Transverse colon (tissue), 4 donors: ENCODE measurements at regions of chr4 and their contacts with region 1.

Region 1: GRCh38 chr4:139734875-139735380 is 69.3 kb downstream of the MGST2 start:
- DNase-seq: peak; percentile 74
- H3K4me3 ChIP-seq: peak overlapping the region; percentile 21 to 54 (median 30)
- H3K27ac ChIP-seq: peak overlapping the region; percentile 70 to 89 (median 78)
- H3K4me1 ChIP-seq: peaks cover 0 to 19% (median 11%) of the 10 kb centered on the region in 4 donors
- H3K27me3 ChIP-seq: no peaks in the 10 kb centered on the region
- CTCF ChIP-seq: peak in 4 of 5 experiments; percentile 65 to 73 (median 72)
- EP300 ChIP-seq: no peak
- POLR2A ChIP-seq: no peak

Region 2: GRCh38 chr4:139887962-139888735 is 153.2 kb after region 1 on chr4:
- in situ Hi-C with region 1: no loop called
- intact Hi-C with region 1: loop called (anchors 10 kb)
- DNase-seq: peak; percentile 16
- H3K4me3 ChIP-seq: no peak overlapping the region
- H3K27ac ChIP-seq: peak overlapping the region in 1 of 4 donors; percentile 18
- H3K4me1 ChIP-seq: peaks cover 0 to 23% (median 10%) of the 10 kb centered on the region in 4 donors
- H3K27me3 ChIP-seq: no peaks in the 10 kb centered on the region
- CTCF ChIP-seq: no peak
- EP300 ChIP-seq: no peak
- POLR2A ChIP-seq: no peak

Region 3: DNA sequence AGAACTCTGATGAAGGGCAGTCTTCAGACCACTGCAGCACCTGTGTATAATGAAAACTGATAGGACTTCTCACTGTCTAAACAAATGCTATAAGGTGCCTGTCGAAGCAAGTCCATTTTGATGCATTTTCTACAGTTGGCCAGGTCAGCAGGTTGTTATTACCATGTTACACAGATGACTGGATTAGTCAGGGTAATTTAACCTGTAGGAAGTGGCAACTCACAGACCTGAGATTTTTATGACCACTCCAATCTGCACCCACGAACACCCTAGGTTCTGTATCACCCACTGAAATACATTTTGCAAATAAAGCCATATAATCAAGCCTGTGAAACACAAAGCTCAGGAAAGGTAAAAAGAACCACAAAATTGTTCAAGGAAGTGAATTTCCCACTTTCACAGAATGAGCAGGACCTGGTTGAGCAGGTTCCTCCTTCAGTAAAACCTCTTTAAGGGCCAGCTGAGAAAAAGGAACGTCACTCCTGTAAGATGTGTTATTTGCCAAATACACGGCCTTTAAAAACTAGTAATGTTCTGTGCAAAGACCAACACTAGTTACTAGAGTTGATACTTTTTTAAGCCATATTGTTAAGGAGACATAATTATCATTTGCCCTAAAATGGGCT is 406.4 kb after region 1 on chr4:
- in situ Hi-C with region 1: no loop called
- intact Hi-C with region 1: loop called (anchors 1 kb)
- DNase-seq: no peak
- H3K4me3 ChIP-seq: no peak overlapping the region
- H3K27ac ChIP-seq: peak overlapping the region; percentile 58 to 68 (median 62)
- H3K4me1 ChIP-seq: peaks cover 0 to 41% (median 14%) of the 10 kb centered on the region in 4 donors
- H3K27me3 ChIP-seq: no peaks in the 10 kb centered on the region
- CTCF ChIP-seq: no peak
- EP300 ChIP-seq: no peak
- POLR2A ChIP-seq: no peak